Common myeloid progenitor, CD34-positive (primary cell): ENCODE measurements at regions of chr2 and their contacts with region 1.

Region 1: DNA sequence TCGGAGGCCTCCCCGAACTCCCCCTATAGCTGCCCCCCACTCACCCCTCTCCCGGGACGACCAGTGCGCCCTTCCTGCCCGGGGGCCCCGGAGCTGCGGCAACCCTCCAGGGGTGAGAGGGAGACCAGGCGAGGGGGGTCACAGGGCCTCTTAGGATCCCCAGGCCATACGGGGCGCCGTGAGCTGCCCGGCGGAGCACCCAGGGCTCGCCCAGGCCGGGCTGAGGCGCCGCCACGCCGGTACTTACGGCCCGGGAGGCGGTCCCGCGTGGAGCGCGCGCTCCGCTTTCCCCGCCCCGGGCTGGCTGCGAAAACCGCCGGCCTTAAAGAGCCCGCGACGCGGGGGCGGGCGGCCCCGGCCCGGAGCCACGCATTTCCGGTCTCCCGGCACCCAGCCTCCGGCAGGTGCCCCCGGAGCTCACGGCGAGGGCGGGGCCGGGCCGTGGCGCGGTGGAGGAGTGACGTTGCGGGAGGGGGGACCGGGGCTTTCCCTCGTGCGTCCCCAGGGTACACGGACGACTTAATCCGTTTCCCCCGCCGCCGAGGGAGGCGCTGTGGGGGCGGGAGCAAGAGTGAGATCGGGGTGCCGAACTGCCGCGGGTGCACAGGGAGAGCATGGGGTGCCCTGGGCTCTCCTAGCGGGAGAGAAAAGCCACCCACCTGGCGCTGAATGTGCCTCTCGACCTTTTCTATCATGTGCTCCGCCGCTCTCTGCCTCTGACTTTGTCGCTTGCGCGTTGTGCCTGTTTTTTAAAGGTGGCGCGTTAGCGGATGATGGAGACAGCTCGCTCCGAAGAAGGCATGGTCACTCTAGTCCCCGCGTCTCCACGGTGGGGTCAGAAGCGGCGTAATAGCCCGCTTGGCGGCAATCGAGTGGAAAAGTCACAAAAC is at the start of gene METTL21A:
- DNase-seq: peak; percentile 95 to 98 (median 97)
- H3K4me3 ChIP-seq: peak within 1 kb of the TSS; percentile 78 to 96 (median 90)
- H3K27ac ChIP-seq: peak within 1 kb of the TSS; percentile 92 to 95
- H3K4me1 ChIP-seq: peaks cover 5 to 56% (median 30%) of the 10 kb centered on the region in 4 experiments
- H3K27me3 ChIP-seq: no peaks in the 10 kb centered on the region

Region 2: GRCh38 chr2:207529330-207530159 is 95.7 kb before region 1 on chr2 and contains the start of gene CREB1:
- CTCF ChIA-PET with region 1: interaction called, 5 read pairs
- POLR2A ChIA-PET with region 1: interaction called, 11 read pairs
- DNase-seq: peak; percentile 98 to 100 (median 100)
- H3K4me3 ChIP-seq: peak within 1 kb of the TSS; percentile 62 to 99 (median 98)
- H3K27ac ChIP-seq: peak within 1 kb of the TSS; percentile 88 to 97
- H3K4me1 ChIP-seq: peaks cover 18 to 52% (median 35%) of the 10 kb centered on the region in 4 experiments
- H3K27me3 ChIP-seq: no peaks in the 10 kb centered on the region

Region 3: GRCh38 chr2:207635468-207636200 is 10.4 kb after region 1 on chr2:
- CTCF ChIA-PET with region 1: interaction called, 25 read pairs
- POLR2A ChIA-PET with region 1: interaction called, 7 read pairs
- DNase-seq: peak in 2 of 3 donors; percentile 73 to 75
- H3K4me3 ChIP-seq: peak overlapping the region in 1 of 7 experiments; percentile 9
- H3K27ac ChIP-seq: no peak overlapping the region
- H3K4me1 ChIP-seq: peaks cover 4 to 50% (median 25%) of the 10 kb centered on the region in 4 experiments
- H3K27me3 ChIP-seq: no peaks in the 10 kb centered on the region

Region 4: GRCh38 chr2:207710814-207711740 is 85.8 kb after region 1 on chr2 and contains the start of gene CCNYL1:
- CTCF ChIA-PET with region 1: interaction called, 13 read pairs
- POLR2A ChIA-PET with region 1: interaction called, 7 read pairs
- DNase-seq: peak; percentile 99 to 100 (median 99)
- H3K4me3 ChIP-seq: peak within 1 kb of the TSS; percentile 55 to 98 (median 94)
- H3K27ac ChIP-seq: peak within 1 kb of the TSS; percentile 52 to 88
- H3K4me1 ChIP-seq: peaks cover 0 to 26% (median 19%) of the 10 kb centered on the region in 4 experiments
- H3K27me3 ChIP-seq: no peaks in the 10 kb centered on the region

Region 5: GRCh38 chr2:207725873-207726578 is 100.8 kb after region 1 on chr2:
- CTCF ChIA-PET with region 1: interaction called, 20 read pairs
- POLR2A ChIA-PET with region 1: no interaction called
- DNase-seq: no peak
- H3K4me3 ChIP-seq: no peak overlapping the region
- H3K27ac ChIP-seq: no peak overlapping the region
- H3K4me1 ChIP-seq: peaks cover 0 to 8% (median 6%) of the 10 kb centered on the region in 4 experiments
- H3K27me3 ChIP-seq: no peaks in the 10 kb centered on the region

Region 6: DNA sequence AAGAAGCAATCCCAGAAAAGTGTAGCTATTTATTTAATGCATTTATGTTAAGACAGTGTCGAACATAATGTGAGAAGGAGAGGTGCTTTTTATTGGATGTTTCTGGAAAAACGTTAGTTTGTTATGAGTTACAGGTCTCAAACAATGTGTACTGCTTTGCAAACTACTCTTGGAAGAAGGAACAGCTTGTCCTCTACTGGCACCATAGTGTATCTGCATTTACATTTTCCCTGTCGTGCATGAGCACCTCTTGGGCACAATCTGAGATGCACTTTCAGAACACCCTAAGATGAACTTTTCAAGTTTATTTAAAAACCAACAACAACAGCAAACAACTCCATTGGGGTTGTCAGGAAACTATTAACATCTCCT is 109.0 kb after region 1 on chr2:
- CTCF ChIA-PET with region 1: interaction called, 33 read pairs
- POLR2A ChIA-PET with region 1: interaction called, 5 read pairs
- DNase-seq: peak; percentile 53 to 75 (median 71)
- H3K4me3 ChIP-seq: no peak overlapping the region
- H3K27ac ChIP-seq: no peak overlapping the region
- H3K4me1 ChIP-seq: no peaks in the 10 kb centered on the region
- H3K27me3 ChIP-seq: no peaks in the 10 kb centered on the region

Region 7: GRCh38 chr2:208040199-208041171 is 415.2 kb after region 1 on chr2:
- CTCF ChIA-PET with region 1: interaction called, 14 read pairs
- POLR2A ChIA-PET with region 1: no interaction called
- DNase-seq: peak; percentile 66 to 85 (median 82)
- H3K4me3 ChIP-seq: no peak overlapping the region
- H3K27ac ChIP-seq: no peak overlapping the region
- H3K4me1 ChIP-seq: no peaks in the 10 kb centered on the region
- H3K27me3 ChIP-seq: no peaks in the 10 kb centered on the region